Posterior vena cava (tissue), 2 donors: ENCODE measurements at regions of chr1 and their contacts with region 1.

Region 1: GRCh38 chr1:171715813-171716251 is 26.0 kb downstream of the VAMP4 start:
- DNase-seq: no peak

Region 2: GRCh38 chr1:171644805-171645483 is 70.9 kb before region 1 on chr1:
- intact Hi-C with region 1: loop called in 1 of 2 experiments (anchors 5 kb)
- DNase-seq: peak; percentile 87

Region 3: DNA sequence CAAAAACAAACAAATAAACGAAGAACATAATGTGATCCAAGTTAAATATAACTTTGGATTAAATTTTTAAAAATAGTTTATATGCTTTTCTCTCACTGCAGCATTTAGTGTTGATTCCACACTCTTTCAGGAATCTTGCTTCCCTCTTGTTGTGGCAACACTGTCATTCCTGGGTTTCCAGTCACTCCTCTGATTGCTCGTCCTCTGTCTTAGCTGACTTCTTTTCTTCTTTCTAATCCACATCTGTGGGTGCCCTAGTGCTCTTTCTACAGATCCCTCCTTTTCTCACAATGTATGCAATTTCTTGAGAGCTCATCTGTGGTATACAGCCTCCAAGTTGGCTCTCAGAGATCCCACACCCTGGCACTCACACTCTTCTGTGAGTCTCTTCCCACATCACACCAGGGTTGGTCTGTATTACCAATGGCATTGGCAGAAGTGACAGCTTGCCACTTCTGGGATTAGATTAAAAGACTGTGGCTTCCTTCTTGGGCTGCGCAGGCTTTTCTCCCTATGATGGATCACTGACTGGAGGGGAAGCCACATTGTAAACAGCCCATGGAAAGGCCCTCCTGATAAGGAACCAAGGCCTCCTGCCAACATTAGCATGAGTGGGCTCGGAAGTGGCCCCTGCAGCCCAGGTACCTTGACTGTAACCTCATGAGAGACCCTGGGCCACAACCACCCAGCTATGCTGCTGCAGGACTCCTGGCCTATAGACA is 51.8 kb before region 1 on chr1:
- intact Hi-C with region 1: loop called in 1 of 2 experiments (anchors 10 kb)
- DNase-seq: no peak